ENCODE measurements at regions of chr21 and their contacts with region 1.

Region 1: DNA sequence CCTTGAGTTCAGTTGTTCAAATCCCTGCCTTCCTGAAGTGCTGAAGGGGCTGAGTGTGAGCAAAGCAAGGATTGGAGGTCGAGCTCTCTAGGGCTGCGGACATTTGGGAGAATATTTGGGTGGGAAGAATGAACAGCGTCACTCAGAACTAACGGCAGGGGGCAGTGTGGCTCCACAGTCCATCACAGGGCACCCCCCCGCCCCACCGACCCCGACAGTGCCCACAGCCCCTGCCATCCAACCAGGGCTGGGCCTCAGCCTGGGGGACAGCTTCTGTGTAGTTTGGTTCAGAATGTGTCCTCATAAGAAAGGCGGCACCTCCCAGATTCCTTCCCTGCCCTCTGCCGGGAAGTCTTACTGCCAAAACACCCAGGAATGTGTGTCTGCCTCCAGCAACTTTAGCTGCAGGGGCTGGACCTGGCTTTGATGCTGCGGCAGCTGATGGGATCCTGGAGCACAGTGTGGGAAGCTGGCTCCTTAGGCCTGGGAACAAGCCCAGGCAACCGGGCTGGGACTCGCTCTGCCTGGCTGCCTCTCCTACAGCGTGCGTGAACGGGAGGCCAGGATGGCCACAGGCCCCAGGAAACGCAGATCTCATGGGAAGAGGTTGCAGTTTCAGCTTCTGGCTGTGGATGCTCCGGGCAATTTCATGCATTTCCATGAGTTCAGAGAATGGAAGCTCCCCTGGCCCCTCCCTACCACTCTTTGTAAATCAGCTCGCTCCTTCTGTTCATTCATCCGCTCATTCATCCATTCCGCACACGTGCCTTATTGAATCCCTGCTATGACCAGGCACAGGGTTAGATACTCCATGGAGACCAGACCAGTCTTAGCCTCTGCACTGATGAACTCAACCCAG is 104.9 kb upstream of the TMPRSS2 start:
- DNase-seq: no peak
- H3K4me3 Mint-ChIP-seq: no peak overlapping the region
- H3K27ac Mint-ChIP-seq: no peak overlapping the region
- H3K4me1 Mint-ChIP-seq: no peaks in the 10 kb centered on the region
- H3K27me3 Mint-ChIP-seq: peaks cover 8% of the 10 kb centered on the region

Region 2: GRCh38 chr21:41768437-41769061 is 155.6 kb after region 1 on chr21:
- intact Hi-C with region 1: loop called (anchors 10 kb)
- DNase-seq: peak; percentile 7
- H3K4me3 Mint-ChIP-seq: peak overlapping the region; percentile 72
- H3K27ac Mint-ChIP-seq: no peak overlapping the region
- H3K4me1 Mint-ChIP-seq: peaks cover 23% of the 10 kb centered on the region
- H3K27me3 Mint-ChIP-seq: peaks cover 62% of the 10 kb centered on the region

Region 3: DNA sequence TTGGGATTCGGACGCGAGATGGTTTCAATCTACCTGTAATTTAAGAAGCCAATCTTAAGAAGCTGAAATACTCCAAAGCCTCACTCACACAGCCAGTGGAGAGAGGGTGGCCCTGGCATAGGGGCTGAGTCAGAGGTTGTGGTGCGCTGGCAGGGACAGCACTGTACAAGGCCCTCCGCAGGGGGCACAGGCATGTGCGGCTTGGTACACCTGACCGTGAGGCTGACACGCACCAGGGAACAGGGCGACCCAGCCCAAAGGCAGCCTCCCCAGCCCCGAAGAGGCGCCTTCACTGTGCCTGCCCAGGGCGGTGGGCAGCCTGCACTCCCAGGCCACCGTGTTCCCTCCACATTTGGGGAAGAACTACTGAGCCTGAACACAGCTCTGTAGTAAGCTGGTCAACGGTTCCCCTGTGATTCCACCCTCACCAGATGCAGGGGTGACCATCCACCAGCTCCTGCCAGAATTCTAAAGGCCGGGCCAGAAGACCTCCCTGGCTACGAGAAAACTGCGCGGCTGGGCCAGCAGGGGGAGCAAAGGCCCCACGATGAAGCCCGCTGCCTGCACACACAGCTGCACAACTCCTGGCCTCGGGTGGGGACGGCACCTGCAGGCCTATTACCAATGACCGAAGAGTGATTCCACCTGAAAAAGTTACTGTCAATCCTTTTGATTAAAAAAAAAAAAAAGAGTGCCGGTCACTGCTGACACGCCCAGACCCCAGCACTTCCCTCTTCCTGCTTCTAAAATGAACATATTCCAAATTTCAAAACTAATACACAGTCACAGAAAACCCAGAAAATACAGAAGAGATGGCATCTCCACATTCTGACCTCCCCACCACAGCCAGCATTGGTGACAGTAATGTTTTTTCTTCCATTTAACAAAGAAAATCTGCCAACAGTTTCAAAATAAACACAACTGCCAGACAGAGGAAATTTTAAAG is 203.6 kb after region 1 on chr21:
- intact Hi-C with region 1: loop called (anchors 2 kb)
- DNase-seq: peak; percentile 22
- H3K4me3 Mint-ChIP-seq: no peak overlapping the region
- H3K27ac Mint-ChIP-seq: no peak overlapping the region
- H3K4me1 Mint-ChIP-seq: no peaks in the 10 kb centered on the region
- H3K27me3 Mint-ChIP-seq: no peaks in the 10 kb centered on the region

Region 4: GRCh38 chr21:42107881-42108553 is 495.1 kb after region 1 on chr21:
- intact Hi-C with region 1: loop called (anchors 2 kb)
- DNase-seq: peak; percentile 50
- H3K4me3 Mint-ChIP-seq: no peak overlapping the region
- H3K27ac Mint-ChIP-seq: no peak overlapping the region
- H3K4me1 Mint-ChIP-seq: peaks cover 7% of the 10 kb centered on the region
- H3K27me3 Mint-ChIP-seq: peaks cover 14% of the 10 kb centered on the region

Region 5: DNA sequence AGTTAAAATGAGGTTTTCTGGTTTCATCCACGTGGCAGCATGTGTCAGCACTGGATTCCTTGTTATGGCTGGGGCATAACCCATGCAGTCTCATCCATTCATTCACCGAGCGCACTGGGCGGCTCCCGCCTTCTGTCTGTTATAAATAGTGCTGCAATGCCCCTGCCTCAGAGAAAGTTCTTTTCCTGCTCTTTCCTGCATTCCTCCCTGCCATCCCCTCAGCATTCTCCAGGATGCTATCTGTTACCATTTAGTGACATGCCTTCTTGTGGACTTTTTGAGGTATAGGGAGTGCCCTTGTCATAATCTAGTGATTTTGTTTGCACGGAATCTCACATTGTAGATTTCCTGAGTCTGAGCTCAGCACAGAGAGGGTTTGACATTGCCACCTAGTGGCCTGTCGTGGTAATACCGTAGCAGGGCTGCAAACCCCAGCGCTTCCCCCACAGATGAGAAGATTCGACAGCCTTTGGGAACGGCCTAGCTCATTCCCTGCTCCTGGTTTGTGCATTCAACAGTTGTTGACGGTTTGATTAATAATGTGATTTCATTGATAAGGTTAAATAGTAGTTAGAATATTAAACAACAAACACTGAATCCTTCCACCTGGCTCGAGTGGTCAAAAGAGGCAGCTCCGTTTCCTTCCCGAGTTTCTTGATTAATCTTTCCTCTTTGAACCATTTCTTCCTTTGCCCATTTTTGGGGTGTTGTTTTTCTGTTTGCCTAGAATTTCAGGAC is 504.5 kb after region 1 on chr21:
- intact Hi-C with region 1: loop called (anchors 1 kb)
- DNase-seq: peak; percentile 47
- H3K4me3 Mint-ChIP-seq: no peak overlapping the region
- H3K27ac Mint-ChIP-seq: no peak overlapping the region
- H3K4me1 Mint-ChIP-seq: peaks cover 13% of the 10 kb centered on the region
- H3K27me3 Mint-ChIP-seq: peaks cover 38% of the 10 kb centered on the region

Measured in activated T-helper 1 cell treated with anti-CD3 and anti-CD28 coated beads, Interleukin-12 subunit alpha, Interleukin-12 subunit beta, Interleukin-2, Interleukin-4 antibody, amounts not matched to agents 30 ng/mL and 10 ng/mL and 1 ng/mL, durations not matched to agents 14 hours and 24 hours and 36 hours (primary cell).